Dorsolateral prefrontal cortex (tissue), 120 donors: ENCODE measurements at regions of chr10 and their contacts with region 1.

Region 1: GRCh38 chr10:77391605-77392235 is 245.9 kb downstream of the KCNMA1 start:
- DNase-seq: peak in 9 of 10 donors; percentile 41 to 83 (median 78)
- H3K4me3 ChIP-seq: no peak overlapping the region
- H3K27ac ChIP-seq: peak overlapping the region in 48 of 59 donors; percentile 29 to 93 (median 78)
- H3K27me3 ChIP-seq: no peaks in the 10 kb centered on the region
- CTCF ChIP-seq: peak in 55 of 56 donors; percentile 44 to 73 (median 59)

Region 2: DNA sequence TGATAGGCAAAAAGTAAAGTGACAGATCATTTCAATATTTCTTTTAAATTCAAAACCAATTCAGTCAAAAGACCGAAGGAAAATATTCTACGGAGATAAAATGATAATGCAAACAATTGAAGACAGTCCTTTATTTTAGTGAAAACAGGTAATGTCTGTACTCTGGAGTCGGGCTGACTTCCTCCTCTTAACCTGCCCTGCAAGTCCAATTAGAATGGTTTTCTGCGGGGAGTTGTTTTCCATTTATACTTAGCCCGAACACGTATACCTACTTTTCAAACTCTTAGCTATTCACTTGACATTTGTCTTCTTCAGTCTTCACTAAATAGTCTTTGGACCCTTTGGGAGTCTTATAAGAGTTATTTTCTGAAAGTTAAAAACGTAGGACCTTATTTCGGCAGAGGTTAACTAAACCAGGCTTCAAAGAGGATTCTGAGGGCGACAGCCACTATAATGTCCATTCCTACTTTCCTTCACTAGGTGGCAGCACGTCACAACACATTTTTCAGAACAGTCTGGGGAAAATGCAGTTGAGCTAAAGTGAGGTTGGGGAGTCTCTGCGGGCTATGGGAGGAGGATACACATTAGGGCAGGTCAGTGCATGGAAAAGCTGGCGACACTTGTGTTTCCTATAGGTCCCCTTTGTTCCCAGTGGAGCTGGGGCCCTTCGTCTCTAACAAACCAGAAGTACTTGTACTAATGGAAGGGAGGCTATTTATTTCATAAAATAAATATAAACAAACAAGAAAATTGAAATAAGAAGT is 226.1 kb before region 1 on chr10:
- intact Hi-C with region 1: loop called in 1 of 2 experiments (anchors 2 kb)
- DNase-seq: peak in 6 of 10 donors; percentile 23 to 55 (median 37)
- H3K4me3 ChIP-seq: peak overlapping the region in 24 of 59 donors; percentile 5 to 46 (median 24)
- H3K27ac ChIP-seq: peak overlapping the region in 3 of 59 donors; percentile 11 to 36 (median 19)
- H3K27me3 ChIP-seq: peaks cover 0 to 8% (median 0%) of the 10 kb centered on the region in 45 donors
- CTCF ChIP-seq: peak; percentile 59 to 91 (median 81)

Region 3: GRCh38 chr10:77179015-77179695 is 212.6 kb before region 1 on chr10:
- intact Hi-C with region 1: loop called in 1 of 2 experiments (anchors 5 kb)
- DNase-seq: peak in 8 of 10 donors; percentile 30 to 76 (median 62)
- H3K4me3 ChIP-seq: no peak overlapping the region
- H3K27ac ChIP-seq: peak overlapping the region in 30 of 59 donors; percentile 1 to 75 (median 42)
- H3K27me3 ChIP-seq: peaks cover 0 to 4% (median 0%) of the 10 kb centered on the region in 45 donors
- CTCF ChIP-seq: no peak

Region 4: GRCh38 chr10:77334499-77334898 is 57.2 kb before region 1 on chr10:
- intact Hi-C with region 1: no loop called
- DNase-seq: no peak
- H3K4me3 ChIP-seq: no peak overlapping the region
- H3K27ac ChIP-seq: no peak overlapping the region
- H3K27me3 ChIP-seq: no peaks in the 10 kb centered on the region
- CTCF ChIP-seq: no peak

Region 5: GRCh38 chr10:77501152-77501845 is 109.6 kb after region 1 on chr10:
- intact Hi-C with region 1: loop called in 1 of 2 experiments (anchors 10 kb)
- DNase-seq: peak in 7 of 10 donors; percentile 36 to 81 (median 60)
- H3K4me3 ChIP-seq: no peak overlapping the region
- H3K27ac ChIP-seq: peak overlapping the region in 32 of 59 donors; percentile 3 to 74 (median 44)
- H3K27me3 ChIP-seq: no peaks in the 10 kb centered on the region
- CTCF ChIP-seq: no peak

Region 6: DNA sequence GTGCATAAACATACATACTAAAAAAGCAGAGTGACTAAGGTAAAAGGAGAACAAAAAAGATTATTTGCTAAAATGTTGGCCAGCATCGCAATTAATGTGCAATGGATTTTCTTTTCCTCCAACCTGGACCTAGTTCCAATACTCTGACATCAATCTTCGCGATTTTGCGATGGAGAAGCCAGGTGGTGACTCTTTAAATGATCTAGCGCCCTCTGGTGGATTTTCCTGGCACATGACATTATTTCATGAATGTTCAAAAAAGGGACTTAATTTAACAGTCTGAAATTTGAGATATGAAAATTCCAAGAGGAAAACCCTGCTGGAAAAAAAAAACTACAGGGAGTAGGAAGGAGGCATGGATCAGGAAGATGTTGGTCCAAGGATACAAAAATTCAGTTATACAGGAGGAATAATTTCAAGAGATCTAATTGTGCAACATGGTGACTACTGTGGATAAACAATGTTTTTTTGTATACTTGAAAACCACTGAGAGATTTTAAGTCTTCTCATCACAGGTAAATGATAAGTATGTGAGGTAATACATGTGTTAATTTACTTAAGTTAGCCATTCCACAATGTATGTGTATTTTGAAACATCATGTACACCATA is 250.2 kb after region 1 on chr10:
- intact Hi-C with region 1: loop called (anchors 2 kb)
- DNase-seq: peak in 5 of 10 donors; percentile 55 to 84 (median 58)
- H3K4me3 ChIP-seq: peak overlapping the region in 2 of 59 donors; percentile 7 to 23
- H3K27ac ChIP-seq: peak overlapping the region in 2 of 59 donors; percentile 7 to 24
- H3K27me3 ChIP-seq: peaks cover 0 to 27% (median 3%) of the 10 kb centered on the region in 45 donors
- CTCF ChIP-seq: peak; percentile 81 to 99 (median 93)

Region 7: DNA sequence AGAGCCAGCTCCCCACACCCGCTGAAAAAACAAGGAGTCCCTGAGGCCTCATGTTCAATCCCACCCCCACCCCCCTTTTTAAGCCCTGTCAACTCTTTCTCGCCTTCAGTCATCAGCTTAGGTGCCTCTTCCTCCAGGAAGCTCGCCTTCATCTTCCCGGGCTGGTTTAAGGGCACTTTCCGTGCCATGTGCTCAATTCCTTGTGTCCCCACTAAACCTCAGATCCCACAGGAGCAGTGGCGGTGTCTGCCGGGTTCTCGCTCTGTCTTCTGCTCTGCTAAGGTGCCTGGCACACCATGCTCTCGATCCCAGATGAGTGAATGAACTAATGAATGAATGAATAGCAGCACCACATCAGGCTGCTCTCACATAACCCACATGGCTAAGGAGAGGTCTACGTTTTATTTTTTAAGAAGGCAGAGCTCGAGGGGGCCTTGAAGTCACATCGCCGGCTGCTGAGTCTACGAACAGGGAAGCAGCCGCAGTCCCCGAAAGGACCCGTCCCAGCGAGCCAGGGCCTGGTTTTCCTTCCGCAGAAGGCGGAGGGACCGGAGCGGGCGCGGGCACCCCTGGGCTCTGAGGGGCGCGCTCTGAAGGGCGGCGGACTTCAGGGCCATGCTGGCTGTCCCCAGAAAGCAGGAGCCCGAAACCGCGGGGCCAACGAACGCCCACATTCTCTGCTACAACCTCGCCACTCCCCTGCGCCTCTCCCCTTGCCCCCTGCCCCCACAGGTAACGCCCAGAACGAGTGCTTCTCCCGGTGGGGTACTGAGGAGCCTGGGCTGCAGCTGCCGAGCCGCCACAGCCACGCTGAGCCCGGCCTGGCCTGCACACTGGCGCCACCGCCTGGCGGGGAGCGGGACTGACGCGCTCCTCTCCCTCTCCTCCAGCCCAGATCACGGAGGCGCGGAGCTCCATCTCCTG is 319.3 kb after region 1 on chr10:
- intact Hi-C with region 1: loop called in 1 of 2 experiments (anchors 5 kb)
- DNase-seq: peak; percentile 56 to 86 (median 74)
- H3K4me3 ChIP-seq: peak overlapping the region; percentile 3 to 70 (median 55)
- H3K27ac ChIP-seq: peak overlapping the region in 2 of 59 donors; percentile 56 to 64
- H3K27me3 ChIP-seq: peaks cover 0 to 20% (median 0%) of the 10 kb centered on the region in 45 donors
- CTCF ChIP-seq: peak; percentile 44 to 97 (median 92)